ENCODE measurements at regions of chr6 and their contacts with region 1.

Region 1: DNA sequence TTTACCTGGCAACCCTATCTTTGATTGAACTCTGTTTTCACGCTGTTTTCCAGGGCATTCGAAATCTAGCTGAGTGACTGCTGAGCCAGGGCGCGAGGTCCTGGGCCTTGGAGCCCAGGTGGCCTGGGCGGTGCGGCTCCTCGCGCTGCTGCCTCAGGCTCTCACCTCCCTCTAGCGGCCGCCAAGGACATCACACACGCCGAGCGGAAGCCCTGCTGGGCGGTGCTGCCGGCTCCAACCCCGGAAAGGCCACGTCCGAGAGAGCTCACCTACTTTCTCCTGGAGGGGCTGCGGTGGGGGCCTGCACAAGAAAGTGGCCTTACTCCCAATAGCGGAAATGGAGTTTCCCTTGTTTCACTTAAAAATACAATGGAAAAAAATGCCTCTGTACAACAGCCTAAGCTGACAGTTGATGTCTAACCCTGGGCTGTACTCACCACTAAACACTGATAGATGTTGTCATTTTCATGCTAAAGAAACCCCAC is 77.7 kb downstream of the ELOVL4 start:
- DNase-seq: no peak
- H3K4me3 ChIP-seq: no peak overlapping the region
- CTCF ChIP-seq: peak; percentile 99

Region 2: GRCh38 chr6:79777713-79778579 is 91.7 kb before region 1 on chr6:
- CTCF ChIA-PET with region 1: interaction called, 89 read pairs
- POLR2A ChIA-PET with region 1: no interaction called
- DNase-seq: no peak
- H3K4me3 ChIP-seq: peak overlapping the region; percentile 39
- CTCF ChIP-seq: peak; percentile 99

Region 3: DNA sequence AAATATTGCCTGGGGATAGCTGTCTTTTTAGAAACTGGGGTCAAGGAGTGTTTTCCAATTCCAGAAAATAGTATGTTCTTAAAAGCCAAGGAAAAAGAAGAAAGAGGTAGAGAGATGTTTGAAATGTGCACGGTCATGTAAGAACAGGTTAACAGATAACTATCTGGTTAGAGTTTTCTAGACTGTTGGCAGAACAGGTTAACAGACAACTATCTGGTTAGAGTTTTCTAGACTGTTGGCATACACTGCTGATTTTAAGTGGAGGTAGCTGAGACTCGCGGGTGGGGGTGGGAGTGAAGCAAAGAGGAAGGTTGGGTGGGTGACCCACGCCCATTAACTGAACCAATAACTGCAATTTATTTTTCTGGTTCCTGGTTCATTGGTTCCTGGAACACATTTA is 79.8 kb before region 1 on chr6:
- CTCF ChIA-PET with region 1: interaction called, 11 read pairs
- POLR2A ChIA-PET with region 1: no interaction called
- DNase-seq: no peak
- H3K4me3 ChIP-seq: no peak overlapping the region
- CTCF ChIP-seq: no peak

Region 4: DNA sequence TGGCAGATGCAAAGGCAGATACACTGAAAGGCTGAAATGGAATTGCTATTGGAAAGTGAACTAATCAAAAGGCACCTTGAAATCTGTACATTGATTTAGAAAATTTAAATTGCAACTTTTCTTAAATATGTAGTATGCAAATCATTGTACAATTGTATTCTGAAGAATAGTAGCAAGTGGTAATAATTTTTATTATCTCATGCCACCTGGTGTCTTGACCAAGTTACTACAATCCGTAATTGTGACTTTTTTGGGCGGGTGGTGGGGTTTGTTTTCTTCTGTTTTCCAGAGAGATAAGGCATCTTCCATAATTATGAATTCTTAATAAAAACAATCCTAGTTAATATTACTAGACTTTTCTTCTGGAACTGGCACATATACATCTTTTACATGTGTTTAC is 224.4 kb after region 1 on chr6:
- CTCF ChIA-PET with region 1: interaction called, 42 read pairs
- POLR2A ChIA-PET with region 1: no interaction called
- DNase-seq: no peak
- H3K4me3 ChIP-seq: no peak overlapping the region
- CTCF ChIP-seq: peak; percentile 30

Region 5: GRCh38 chr6:80197986-80198385 is 328.3 kb after region 1 on chr6:
- CTCF ChIA-PET with region 1: no interaction called
- POLR2A ChIA-PET with region 1: no interaction called
- DNase-seq: no peak
- H3K4me3 ChIP-seq: no peak overlapping the region
- CTCF ChIP-seq: no peak